Head of caudate nucleus (tissue), 42 donors: ENCODE measurements at regions of chr13 and their contacts with region 1.

Region 1: DNA sequence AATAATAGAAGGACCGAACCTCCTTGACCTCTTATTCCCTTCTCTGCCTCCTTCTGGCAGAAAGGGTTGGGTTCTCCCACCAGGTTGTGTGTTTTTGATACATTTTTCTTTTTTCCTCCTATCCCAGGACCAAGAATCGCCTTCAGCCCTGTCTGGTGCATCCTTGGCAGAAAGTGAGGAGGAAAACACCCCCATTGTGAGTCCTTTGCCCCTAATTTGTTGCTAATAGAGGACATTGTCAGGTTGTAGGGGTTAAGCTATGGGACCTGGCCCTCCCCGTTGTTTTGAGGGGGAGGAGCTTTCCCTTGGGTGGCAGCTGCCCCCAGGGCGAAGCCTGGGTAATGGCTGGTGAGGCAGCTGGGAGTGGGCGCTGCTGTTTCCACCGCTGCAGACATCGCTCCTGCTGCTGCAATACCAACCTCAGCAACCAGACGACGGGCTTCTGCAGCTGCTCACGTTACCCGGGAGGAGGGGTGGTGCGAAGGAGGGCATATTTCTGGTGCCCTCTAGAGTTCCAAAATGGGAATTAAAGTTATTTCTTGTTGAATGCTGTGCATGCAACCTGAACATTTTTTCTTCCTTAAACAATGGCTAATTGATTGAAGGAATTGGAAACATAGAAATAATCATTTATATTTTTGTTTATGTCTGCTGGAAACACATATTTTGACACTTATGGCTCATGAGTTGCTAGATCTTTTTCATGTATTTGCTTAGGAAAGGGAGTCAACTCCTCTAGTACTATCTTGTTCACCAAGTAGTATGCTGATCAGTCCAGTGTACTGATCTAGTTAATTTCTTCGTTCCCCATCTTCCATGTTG is 1.5 kb downstream of the ZMYM2 start:
- DNase-seq: peak; percentile 75 to 96 (median 89)

Region 2: DNA sequence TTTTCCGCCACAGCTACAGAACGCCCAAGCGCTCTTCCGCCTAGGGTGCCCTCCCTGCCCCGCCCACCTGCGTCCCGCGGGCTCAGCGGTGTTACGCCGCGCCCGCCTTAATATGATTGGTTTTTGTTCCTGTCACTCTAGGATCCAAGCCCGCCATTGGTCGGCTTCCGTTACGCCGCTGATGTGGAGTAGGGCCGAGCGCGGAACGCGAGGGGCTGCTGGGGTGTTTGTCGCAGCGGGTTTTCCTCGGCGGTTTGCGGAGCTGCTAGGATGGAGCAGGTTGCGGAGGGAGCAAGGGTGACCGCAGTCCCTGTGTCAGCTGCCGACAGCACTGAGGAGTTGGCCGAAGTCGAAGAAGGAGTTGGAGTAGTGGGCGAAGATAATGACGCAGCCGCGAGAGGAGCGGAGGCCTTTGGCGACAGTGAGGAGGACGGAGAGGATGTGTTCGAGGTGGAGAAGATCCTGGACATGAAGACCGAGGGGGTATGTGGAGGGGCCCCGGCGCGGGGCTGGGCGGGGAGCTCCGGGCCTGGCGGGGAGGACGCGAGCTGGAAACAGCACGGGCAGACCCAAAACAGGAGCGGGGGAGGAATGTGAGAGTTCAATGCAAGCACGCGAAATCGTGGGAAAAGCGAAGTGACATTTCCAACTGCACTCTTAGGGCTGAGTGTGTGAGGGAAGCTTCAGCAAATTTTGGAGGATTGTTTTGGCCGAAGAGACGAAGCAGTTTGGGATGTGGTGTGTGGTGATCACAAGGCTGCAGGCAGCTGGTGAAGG is 326.4 kb before region 1 on chr13 and contains the start of gene MPHOSPH8:
- intact Hi-C with region 1: loop called (anchors 10 kb)
- DNase-seq: peak; percentile 89 to 98 (median 95)

Region 3: DNA sequence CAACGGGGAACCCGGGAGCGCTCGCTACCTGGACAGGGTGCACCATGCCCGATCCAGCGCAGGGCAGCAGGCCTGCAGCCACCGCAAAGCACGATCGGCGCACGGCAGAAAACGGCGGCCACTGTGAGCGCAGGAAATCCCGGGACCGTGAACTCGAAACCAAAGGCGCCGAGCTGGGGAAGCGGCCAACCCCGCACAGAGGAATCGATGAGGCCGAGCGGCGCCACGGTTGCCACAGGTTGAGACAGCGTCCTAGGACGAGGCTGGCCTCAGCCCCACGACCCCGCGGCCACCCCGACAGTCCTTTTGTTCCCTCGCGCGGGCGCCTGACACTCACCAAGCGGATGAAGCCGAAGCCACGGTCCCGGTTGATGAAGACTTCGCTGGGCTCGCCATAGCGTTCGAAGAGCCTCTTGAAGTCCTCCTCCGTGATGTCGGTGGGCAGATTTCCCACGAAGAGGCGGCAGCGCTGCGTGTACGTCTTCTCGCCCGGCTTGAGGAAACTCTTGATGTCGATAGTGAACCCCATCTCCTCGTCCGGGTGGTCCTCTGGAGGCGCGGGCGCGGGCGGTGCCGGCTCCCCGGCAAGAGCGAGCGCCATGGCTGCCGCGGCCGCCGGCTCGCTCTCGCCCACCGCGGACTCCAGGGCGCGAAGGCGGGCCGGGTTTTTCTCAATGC is 177.9 kb before region 1 on chr13:
- intact Hi-C with region 1: loop called (anchors 10 kb)
- DNase-seq: peak; percentile 25 to 82 (median 61)